Thyroid gland (tissue), 4 donors: ENCODE measurements at regions of chr4 and their contacts with region 1.

Region 1: DNA sequence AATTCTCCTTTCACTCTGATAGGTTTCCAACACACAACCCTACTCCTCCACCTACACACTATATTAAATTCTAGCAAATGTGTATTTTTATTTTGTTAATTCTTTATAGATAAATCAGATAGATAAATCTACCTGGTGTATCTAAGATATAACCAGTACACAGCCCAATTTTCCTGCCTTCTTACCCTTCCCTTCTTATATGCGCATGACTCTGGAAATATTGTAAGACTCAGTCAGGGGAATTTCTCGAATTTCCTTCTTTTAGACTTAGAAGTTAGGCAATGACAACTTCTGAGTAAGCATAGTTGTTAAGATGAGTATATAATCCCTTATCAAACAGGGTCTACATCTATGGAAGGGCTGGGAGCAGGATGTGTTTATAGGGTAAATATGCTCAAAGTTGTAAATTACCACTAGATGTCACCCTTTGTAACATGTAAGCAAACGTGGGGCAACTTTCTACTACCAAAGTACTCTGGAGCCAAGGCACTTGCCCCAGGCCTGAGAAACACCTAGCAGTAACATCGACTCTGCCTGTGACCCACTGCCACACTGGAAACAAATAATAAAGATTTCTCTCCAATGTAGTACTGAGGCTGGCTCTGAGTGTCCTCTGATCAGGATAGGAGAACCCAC is 444.7 kb downstream of the IQCM start:
- DNase-seq: peak; percentile 7 to 15
- H3K4me3 ChIP-seq: no peak overlapping the region
- H3K27ac ChIP-seq: no peak overlapping the region
- H3K4me1 ChIP-seq: no peaks in the 10 kb centered on the region
- H3K27me3 ChIP-seq: no peaks in the 10 kb centered on the region
- CTCF ChIP-seq: peak in 4 of 6 experiments; percentile 29 to 55 (median 46)
- POLR2A ChIP-seq: no peak

Region 2: GRCh38 chr4:149897783-149898182 is 526.9 kb after region 1 on chr4:
- intact Hi-C with region 1: loop called (anchors 10 kb)
- DNase-seq: no peak
- H3K4me3 ChIP-seq: no peak overlapping the region
- H3K27ac ChIP-seq: no peak overlapping the region
- H3K4me1 ChIP-seq: no peaks in the 10 kb centered on the region
- H3K27me3 ChIP-seq: no peaks in the 10 kb centered on the region
- CTCF ChIP-seq: peak in 5 of 6 experiments; percentile 22 to 73 (median 48)
- POLR2A ChIP-seq: no peak